ENCODE measurements at regions of chr16 and their contacts with region 1.

Region 1: GRCh38 chr16:89171463-89172170 is at the start of gene CDH15:
- DNase-seq: peak; percentile 99
- ATAC-seq: peak; percentile 97
- H3K4me3 Mint-ChIP-seq: peak within 1 kb of the TSS; percentile 43
- H3K27ac Mint-ChIP-seq: peak within 1 kb of the TSS; percentile 38
- H3K4me1 Mint-ChIP-seq: peaks cover 7% of the 10 kb centered on the region
- H3K27me3 Mint-ChIP-seq: peaks cover 3% of the 10 kb centered on the region
- total RNA-seq, gene CDH15: not detected

Region 2: GRCh38 chr16:88569985-88570690 is 601.5 kb before region 1 on chr16 and contains the start of gene ZC3H18:
- CTCF ChIA-PET with region 1: no interaction called
- POLR2A ChIA-PET with region 1: no interaction called
- intact Hi-C with region 1: loop called in 1 of 2 experiments (anchors 1 kb)
- DNase-seq: peak; percentile 99
- ATAC-seq: peak; percentile 83
- H3K4me3 Mint-ChIP-seq: peak within 1 kb of the TSS; percentile 88
- H3K27ac Mint-ChIP-seq: peak within 1 kb of the TSS; percentile 79
- H3K4me1 Mint-ChIP-seq: peaks cover 44% of the 10 kb centered on the region
- H3K27me3 Mint-ChIP-seq: no peaks in the 10 kb centered on the region
- total RNA-seq, gene ZC3H18: 70.0 to 76.4 TPM

Region 3: DNA sequence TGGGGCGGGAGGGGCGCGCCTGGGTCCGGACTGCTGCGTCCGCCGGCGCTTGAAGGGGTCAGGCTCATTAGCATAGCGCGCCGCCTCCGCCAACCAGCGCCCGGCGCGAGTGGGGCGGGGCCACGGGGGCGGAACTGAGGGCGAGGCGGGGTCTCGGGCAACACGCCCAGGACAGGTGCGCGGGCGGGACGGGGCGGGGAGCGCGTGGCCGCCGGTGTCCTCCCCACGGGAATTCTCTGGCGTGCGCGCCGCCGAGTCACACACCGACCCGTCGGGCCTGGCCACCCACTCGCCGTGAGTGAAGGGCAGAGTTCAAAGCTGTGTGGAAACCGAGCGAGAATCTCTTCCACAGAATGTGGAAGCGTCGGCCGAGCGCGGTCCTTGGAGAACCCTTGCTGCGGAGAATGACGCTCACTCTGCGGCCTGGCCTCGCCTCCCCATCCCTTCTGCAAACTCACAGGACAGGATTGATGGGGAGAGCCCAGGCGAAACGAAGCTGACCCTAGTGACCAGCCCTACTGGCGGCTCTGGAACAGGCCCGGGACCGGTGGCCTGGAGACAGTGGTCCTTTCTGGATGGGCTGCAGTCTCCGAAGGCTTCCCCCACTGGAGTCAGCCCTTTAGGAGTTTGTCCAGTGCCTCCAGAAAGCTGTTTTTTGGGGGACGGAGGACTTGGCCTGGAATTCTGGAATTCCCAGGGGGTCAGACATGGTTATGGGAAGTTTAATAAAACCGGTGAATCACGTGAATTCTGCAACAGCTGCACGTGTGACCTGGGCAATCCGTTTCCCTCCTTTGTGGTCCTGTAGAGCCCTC is 485.0 kb before region 1 on chr16 and contains the start of gene SNAI3:
- CTCF ChIA-PET with region 1: no interaction called
- POLR2A ChIA-PET with region 1: no interaction called
- intact Hi-C with region 1: loop called in 1 of 2 experiments (anchors 1 kb)
- DNase-seq: peak; percentile 91
- ATAC-seq: peak; percentile 69
- H3K4me3 Mint-ChIP-seq: peak within 1 kb of the TSS; percentile 70
- H3K27ac Mint-ChIP-seq: peak within 1 kb of the TSS; percentile 37
- H3K4me1 Mint-ChIP-seq: peaks cover 42% of the 10 kb centered on the region
- H3K27me3 Mint-ChIP-seq: no peaks in the 10 kb centered on the region
- total RNA-seq, gene SNAI3: 3.6 to 4.1 TPM

Region 4: DNA sequence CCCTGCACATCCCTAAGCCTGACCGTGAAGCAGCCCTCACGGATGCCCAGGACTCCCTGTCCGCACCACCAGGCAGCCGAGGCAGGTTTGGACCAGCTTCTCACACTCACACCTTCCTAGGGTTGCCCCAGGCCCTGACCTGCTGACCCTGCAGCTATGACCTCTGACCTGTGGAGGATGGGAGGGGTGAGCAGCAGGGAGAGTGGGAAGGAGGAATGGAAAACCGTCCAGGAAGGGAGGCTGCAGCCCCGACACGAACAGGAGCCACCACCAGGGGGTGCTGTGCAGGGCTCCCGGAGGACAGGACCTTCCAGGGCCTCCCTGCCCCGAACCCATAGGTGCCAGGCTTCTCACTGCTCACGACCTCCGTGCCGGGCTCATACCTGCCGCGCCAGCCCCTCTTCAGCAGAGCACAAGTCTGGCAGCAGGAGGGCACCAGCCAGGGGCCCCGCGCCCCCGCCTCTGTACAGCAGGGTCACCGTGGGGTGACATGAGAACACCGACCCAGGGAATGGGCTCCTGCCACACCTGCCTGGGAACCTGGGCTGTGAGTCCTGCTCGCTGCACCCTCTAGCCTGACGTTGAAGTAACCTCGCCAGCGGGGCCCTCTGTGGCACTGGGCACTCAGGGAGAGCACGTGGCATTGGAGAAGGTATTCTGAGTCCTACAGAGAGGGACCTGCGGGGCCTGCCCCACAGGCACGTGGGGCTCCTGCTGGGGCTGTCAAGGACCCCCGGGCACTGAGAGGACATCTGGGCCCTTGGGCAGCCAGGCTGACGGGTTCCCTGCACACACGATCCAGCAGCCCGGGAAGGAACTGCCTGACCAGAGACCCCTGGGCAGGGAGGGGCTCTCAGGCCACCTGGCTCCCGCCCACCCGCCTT is 427.7 kb before region 1 on chr16:
- CTCF ChIA-PET with region 1: no interaction called
- POLR2A ChIA-PET with region 1: no interaction called
- intact Hi-C with region 1: loop called (anchors 2 to 5 kb)
- DNase-seq: peak; percentile 86
- ATAC-seq: peak; percentile 32
- H3K4me3 Mint-ChIP-seq: no peak overlapping the region
- H3K27ac Mint-ChIP-seq: no peak overlapping the region
- H3K4me1 Mint-ChIP-seq: peaks cover 30% of the 10 kb centered on the region
- H3K27me3 Mint-ChIP-seq: no peaks in the 10 kb centered on the region

Region 5: DNA sequence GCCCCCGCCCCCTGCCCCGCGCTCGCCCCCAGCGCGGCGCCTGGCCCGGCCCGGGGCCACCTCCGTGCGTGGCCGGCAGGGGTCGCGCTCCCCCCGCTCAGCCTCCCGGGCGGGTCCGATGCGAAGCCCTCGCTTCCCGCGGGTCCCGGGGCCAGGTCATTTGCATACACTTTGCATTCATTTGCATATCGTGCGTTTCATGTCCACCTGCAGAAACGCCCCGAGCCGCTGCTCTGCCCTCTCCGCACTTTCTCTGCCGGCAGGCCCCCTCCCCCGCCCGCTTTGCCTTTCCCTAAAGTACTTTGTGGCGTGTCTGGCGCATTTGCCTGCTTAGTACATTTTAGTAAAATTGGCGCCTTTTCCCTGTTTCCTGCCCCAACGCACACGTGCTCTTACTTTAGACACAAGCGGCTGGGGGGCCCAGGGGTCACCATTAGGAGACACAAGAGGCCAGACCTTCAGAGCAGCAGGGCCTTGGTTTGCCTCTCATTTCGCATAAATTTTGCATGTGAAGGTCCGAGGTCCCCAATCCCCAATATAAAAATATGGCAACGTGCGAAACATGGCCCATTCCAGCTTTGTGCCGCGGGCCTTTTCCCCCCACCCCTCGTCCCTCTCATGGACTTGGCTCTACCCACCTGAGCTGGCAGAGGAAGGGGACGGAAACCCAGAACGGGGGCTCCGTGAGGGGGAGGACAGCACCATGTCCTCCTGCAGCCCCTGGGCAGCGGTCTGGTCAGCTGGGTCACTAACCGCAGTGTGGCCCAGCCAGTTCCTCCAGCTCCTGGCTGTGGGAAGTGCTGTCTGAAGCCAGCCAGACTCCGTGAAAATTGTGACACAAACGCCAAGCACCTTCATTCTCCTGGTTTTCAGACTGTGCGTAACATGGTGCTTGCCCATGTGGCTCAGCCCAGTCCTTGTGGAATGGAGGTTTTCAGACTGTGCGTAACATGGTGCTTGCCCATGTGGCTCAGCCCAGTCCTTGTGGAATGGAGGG is 229.4 kb before region 1 on chr16:
- CTCF ChIA-PET with region 1: interaction called, 9 read pairs
- POLR2A ChIA-PET with region 1: no interaction called
- intact Hi-C with region 1: loop called (anchors 1 to 2 kb)
- DNase-seq: peak; percentile 79
- ATAC-seq: peak; percentile 86
- H3K4me3 Mint-ChIP-seq: no peak overlapping the region
- H3K27ac Mint-ChIP-seq: no peak overlapping the region
- H3K4me1 Mint-ChIP-seq: no peaks in the 10 kb centered on the region
- H3K27me3 Mint-ChIP-seq: peaks cover 18% of the 10 kb centered on the region

Region 6: GRCh38 chr16:89201439-89202377 is 30.1 kb after region 1 on chr16:
- CTCF ChIA-PET with region 1: interaction called, 3 read pairs
- POLR2A ChIA-PET with region 1: no interaction called
- intact Hi-C with region 1: loop called (anchors 1 kb)
- DNase-seq: peak; percentile 94
- ATAC-seq: peak; percentile 97
- H3K4me3 Mint-ChIP-seq: peak overlapping the region; percentile 44
- H3K27ac Mint-ChIP-seq: no peak overlapping the region
- H3K4me1 Mint-ChIP-seq: peaks cover 13% of the 10 kb centered on the region
- H3K27me3 Mint-ChIP-seq: peaks cover 32% of the 10 kb centered on the region

Region 7: GRCh38 chr16:89330177-89330856 is 158.7 kb after region 1 on chr16:
- CTCF ChIA-PET with region 1: no interaction called
- POLR2A ChIA-PET with region 1: no interaction called
- intact Hi-C with region 1: no loop called
- DNase-seq: no peak
- ATAC-seq: peak; percentile 32
- H3K4me3 Mint-ChIP-seq: no peak overlapping the region
- H3K27ac Mint-ChIP-seq: peak overlapping the region; percentile 63
- H3K4me1 Mint-ChIP-seq: peaks cover 88% of the 10 kb centered on the region
- H3K27me3 Mint-ChIP-seq: no peaks in the 10 kb centered on the region

Measured in activated CD4-positive, alpha-beta T cell treated with anti-CD3 and anti-CD28 coated beads for 36 hours (primary cell).